ENCODE measurements at regions of chr3 and their contacts with region 1.

Region 1: DNA sequence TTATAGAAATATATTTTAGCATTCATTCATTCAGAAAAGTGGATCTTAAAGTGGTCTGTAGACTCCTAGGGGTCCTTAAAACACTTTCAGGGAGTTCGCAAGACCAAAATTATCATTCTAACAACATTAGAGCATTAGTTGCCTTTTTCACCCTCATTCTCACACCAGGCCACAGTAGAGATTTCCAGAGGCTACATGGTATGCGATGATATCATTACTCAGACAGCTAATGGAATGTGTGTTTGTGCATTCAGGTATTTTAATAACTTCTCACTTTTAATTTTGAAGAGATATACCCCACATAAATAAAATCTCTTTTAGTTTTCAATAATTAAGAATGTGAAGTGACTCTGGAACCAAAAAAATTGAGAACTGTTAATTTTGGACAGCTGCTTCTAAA is 206.9 kb downstream of the NSUN3 start:
- DNase-seq: no peak
- ATAC-seq: no peak
- H3K4me3 ChIP-seq: no peak overlapping the region
- H3K27ac ChIP-seq: no peak overlapping the region
- H3K4me1 ChIP-seq: no peaks in the 10 kb centered on the region
- H3K27me3 ChIP-seq: no peaks in the 10 kb centered on the region
- CTCF ChIP-seq: no peak

Region 2: GRCh38 chr3:94494992-94495391 is 225.2 kb after region 1 on chr3:
- CTCF ChIA-PET with region 1: no interaction called
- POLR2A ChIA-PET with region 1: no interaction called
- in situ Hi-C with region 1: no loop called
- intact Hi-C with region 1: loop called (anchors 10 kb)
- DNase-seq: no peak
- ATAC-seq: no peak
- H3K4me3 ChIP-seq: no peak overlapping the region
- H3K27ac ChIP-seq: no peak overlapping the region
- H3K4me1 ChIP-seq: no peaks in the 10 kb centered on the region
- H3K27me3 ChIP-seq: no peaks in the 10 kb centered on the region
- CTCF ChIP-seq: no peak

Measured in Panc1 (cell line).